Sigmoid colon (tissue), 7 donors: ENCODE measurements at regions of chr11 and their contacts with region 1.

Region 1: GRCh38 chr11:11621573-11622319 is at the start of gene GALNT18:
- DNase-seq: peak; percentile 97
- H3K4me3 ChIP-seq: peak within 1 kb of the TSS; percentile 64 to 85 (median 77)
- H3K27ac ChIP-seq: peak within 1 kb of the TSS; percentile 85 to 93 (median 88)
- H3K4me1 ChIP-seq: peaks cover 0 to 54% (median 49%) of the 10 kb centered on the region in 4 donors
- H3K27me3 ChIP-seq: no peaks in the 10 kb centered on the region
- CTCF ChIP-seq: peak in 2 of 4 experiments; percentile 50 to 54
- EP300 ChIP-seq: no peak
- POLR2A ChIP-seq: peak in 1 of 2 donors; percentile 73
- total RNA-seq, gene GALNT18: 34.9 to 48.6 (median 39.8) TPM

Region 2: DNA sequence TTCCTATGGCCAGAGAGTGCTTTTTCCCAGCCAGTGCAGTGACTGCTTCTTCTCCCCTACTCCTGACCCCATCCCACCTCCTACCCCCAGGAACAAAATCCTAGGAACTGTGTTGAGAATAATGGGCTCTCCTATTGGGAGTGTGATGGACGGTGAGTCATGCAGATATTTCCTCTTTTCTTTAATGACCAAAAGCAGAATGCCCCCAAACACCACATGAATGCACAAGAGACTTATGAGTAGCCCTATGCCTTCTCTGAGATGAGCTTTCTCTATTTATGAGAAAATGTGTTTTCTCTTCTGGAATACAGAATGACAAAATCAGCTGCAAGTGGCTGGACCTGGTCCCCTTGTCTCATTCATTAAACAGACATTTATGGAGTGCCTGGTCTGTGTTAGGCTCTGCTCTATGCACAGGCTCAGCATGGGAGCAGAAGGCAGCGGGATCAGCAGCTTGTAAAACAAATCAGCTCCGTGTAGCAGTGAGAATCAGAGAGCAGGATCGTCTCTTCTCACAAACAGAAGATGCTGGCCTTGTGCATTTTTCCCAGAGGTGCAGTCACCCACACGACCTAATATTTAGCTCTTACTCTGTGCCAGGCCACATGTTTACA is 47.6 kb after region 1 on chr11:
- intact Hi-C with region 1: loop called (anchors 1 kb)
- DNase-seq: peak; percentile 83
- H3K4me3 ChIP-seq: no peak overlapping the region
- H3K27ac ChIP-seq: peak overlapping the region in 3 of 4 donors; percentile 68 to 75 (median 68)
- H3K4me1 ChIP-seq: peaks cover 0 to 48% (median 34%) of the 10 kb centered on the region in 4 donors
- H3K27me3 ChIP-seq: no peaks in the 10 kb centered on the region
- CTCF ChIP-seq: no peak
- EP300 ChIP-seq: peak in 1 of 4 donors; percentile 73
- POLR2A ChIP-seq: no peak